Lower leg skin (tissue), 4 donors: ENCODE measurements at regions of chr7 and their contacts with region 1.

Region 1: GRCh38 chr7:132453826-132454225 is 122.4 kb downstream of the PLXNA4 start:
- DNase-seq: no peak
- H3K4me3 ChIP-seq: no peak overlapping the region
- CTCF ChIP-seq: no peak
- POLR2A ChIP-seq: no peak

Region 2: DNA sequence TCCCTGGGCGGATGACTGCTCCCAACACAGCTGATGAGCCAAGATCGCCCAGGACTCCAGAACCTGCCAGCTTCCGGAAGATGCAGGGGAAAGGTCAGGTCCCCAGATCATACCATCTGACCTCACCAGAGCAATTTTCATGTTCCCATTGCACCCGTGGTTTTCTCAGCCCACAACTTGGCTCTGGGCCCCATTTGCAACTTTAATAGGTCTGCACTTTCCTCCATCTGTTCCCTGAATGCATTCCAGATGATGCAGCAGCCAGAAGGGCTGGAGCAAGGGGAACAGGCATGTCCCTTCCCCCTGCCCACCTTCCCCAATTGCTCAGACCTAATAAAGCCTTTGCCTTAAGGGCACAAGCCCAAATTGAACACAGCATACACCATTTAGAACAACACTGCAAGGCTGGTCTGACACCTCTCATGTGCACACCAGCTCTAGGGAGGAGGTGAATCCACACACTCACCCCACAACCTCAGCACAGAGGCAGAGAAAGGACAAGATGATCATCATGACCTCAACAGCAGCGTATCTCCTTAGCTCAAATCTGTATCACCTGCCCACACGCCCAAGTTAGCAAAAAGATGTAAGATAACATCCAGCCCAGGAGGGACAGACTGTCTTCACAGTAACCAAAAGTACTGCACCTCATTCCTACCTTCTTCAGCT is 34.9 kb after region 1 on chr7:
- intact Hi-C with region 1: no loop called
- DNase-seq: no peak
- H3K4me3 ChIP-seq: no peak overlapping the region
- CTCF ChIP-seq: no peak
- POLR2A ChIP-seq: no peak

Region 3: GRCh38 chr7:132526111-132526740 is 72.4 kb after region 1 on chr7:
- intact Hi-C with region 1: loop called (anchors 2 kb)
- DNase-seq: peak in 1 of 2 donors; percentile 17
- H3K4me3 ChIP-seq: no peak overlapping the region
- CTCF ChIP-seq: no peak
- POLR2A ChIP-seq: no peak

Region 4: GRCh38 chr7:133571076-133571475 is 1117.2 kb after region 1 on chr7:
- intact Hi-C with region 1: no loop called
- DNase-seq: no peak
- H3K4me3 ChIP-seq: no peak overlapping the region
- CTCF ChIP-seq: no peak
- POLR2A ChIP-seq: no peak